ENCODE measurements at regions of chr4 and their contacts with region 1.

Region 1: DNA sequence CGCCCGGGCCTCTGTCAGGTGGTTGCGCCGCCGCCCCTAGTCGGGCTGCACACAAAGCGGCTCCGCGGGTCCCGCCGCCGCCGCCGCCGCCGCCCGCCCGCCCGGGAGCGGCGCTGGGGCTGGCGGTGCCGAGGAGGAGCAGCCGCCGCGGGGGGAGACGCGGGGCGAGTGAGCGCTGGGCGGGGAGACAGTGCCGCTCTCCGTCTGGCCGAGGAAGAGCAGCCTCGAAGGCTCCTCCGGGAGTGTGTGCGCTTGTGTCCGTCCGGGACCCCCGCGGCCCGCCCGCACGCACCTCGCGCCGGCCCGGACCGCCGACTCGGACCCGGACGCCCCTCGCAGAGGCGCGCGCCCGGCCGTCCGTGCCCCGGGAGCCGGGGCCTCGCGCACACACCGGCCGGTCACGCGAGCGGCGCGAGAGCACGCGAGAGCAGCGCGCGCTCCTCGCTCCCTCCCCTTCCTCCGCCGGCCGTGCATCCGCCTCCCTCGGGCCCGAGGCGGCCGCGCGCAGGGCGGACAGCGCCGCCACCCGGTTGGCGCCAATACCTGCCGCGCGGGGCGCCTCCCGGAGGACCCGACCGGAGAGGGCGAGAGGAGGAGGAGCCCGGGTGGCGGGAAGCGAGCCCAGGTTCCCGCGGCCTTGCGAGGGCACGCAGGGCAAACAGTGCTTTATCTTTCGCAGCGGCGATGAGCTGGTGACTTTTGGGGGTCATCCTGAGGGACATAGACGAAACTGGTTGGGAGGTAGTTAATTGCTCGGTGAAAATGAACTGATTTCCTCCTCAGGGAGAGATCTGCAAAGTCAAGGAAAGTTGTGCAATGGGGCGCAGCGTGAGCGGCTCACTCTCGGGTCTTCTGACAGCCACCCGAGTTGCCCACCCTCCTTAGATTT is at the start of gene PDS5A:
- DNase-seq: peak; percentile 94
- H3K4me3 ChIP-seq: peak within 1 kb of the TSS; percentile 85 to 96 (median 87)
- H3K27ac ChIP-seq: peak within 1 kb of the TSS; percentile 80
- H3K4me1 ChIP-seq: peaks cover 10% of the 10 kb centered on the region
- H3K27me3 ChIP-seq: no peaks in the 10 kb centered on the region
- CTCF ChIP-seq: peak; percentile 73 to 83
- total RNA-seq, gene PDS5A: 72.2 to 78.5 TPM

Region 2: GRCh38 chr4:39638354-39639240 is 339.1 kb before region 1 on chr4 and contains the start of gene SMIM14:
- CTCF ChIA-PET with region 1: no interaction called
- dilution Hi-C with region 1: no loop called
- in situ Hi-C with region 1: no loop called
- intact Hi-C with region 1: loop called (anchors 2 kb)
- DNase-seq: peak; percentile 98
- H3K4me3 ChIP-seq: peak within 1 kb of the TSS; percentile 66 to 93 (median 76)
- H3K27ac ChIP-seq: peak within 1 kb of the TSS; percentile 98
- H3K4me1 ChIP-seq: peaks cover 23% of the 10 kb centered on the region
- H3K27me3 ChIP-seq: no peaks in the 10 kb centered on the region
- CTCF ChIP-seq: peak in 1 of 2 donors; percentile 14
- total RNA-seq, gene SMIM14: 15.7 to 26.8 TPM

Region 3: GRCh38 chr4:39697740-39698423 is 279.9 kb before region 1 on chr4 and contains the start of gene UBE2K:
- CTCF ChIA-PET with region 1: no interaction called
- dilution Hi-C with region 1: no loop called
- in situ Hi-C with region 1: no loop called
- intact Hi-C with region 1: loop called (anchors 1 kb)
- DNase-seq: peak; percentile 88
- H3K4me3 ChIP-seq: peak within 1 kb of the TSS; percentile 84 to 97 (median 86)
- H3K27ac ChIP-seq: peak within 1 kb of the TSS; percentile 79
- H3K4me1 ChIP-seq: peaks cover 8% of the 10 kb centered on the region
- H3K27me3 ChIP-seq: no peaks in the 10 kb centered on the region
- CTCF ChIP-seq: no peak
- total RNA-seq, gene UBE2K: 23.3 to 105 TPM

Region 4: DNA sequence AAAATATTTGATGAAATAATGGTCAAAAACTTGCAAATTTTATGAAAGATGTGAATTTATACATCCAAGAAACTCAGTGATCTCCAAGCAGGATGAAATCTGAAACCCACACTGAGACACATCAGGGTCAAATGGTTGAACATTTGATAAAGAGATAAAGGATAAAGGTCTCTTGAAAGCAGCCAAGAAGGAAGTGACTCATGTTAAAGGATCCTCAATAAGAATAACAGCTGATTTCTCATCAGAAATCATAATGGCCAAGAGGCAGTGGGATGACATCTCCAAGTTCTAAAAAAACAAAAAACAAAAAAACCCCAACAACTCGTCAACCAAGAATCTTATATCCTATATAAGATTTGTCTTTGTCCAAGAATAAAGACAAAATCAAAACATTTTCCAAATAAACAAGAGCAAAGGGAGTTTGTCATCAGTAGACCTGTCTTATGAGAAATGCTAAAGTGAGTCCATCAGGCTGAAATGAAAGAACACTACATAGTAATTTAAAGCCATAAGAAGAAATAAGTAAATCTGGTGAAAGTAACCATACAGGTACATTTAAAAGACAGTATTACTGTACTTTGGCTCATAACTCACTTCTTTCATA is 121.7 kb before region 1 on chr4:
- CTCF ChIA-PET with region 1: no interaction called
- dilution Hi-C with region 1: no loop called
- in situ Hi-C with region 1: no loop called
- intact Hi-C with region 1: loop called (anchors 10 kb)
- DNase-seq: peak; percentile 55
- H3K4me3 ChIP-seq: no peak overlapping the region
- H3K27ac ChIP-seq: no peak overlapping the region
- H3K4me1 ChIP-seq: no peaks in the 10 kb centered on the region
- H3K27me3 ChIP-seq: no peaks in the 10 kb centered on the region
- CTCF ChIP-seq: no peak

Region 5: DNA sequence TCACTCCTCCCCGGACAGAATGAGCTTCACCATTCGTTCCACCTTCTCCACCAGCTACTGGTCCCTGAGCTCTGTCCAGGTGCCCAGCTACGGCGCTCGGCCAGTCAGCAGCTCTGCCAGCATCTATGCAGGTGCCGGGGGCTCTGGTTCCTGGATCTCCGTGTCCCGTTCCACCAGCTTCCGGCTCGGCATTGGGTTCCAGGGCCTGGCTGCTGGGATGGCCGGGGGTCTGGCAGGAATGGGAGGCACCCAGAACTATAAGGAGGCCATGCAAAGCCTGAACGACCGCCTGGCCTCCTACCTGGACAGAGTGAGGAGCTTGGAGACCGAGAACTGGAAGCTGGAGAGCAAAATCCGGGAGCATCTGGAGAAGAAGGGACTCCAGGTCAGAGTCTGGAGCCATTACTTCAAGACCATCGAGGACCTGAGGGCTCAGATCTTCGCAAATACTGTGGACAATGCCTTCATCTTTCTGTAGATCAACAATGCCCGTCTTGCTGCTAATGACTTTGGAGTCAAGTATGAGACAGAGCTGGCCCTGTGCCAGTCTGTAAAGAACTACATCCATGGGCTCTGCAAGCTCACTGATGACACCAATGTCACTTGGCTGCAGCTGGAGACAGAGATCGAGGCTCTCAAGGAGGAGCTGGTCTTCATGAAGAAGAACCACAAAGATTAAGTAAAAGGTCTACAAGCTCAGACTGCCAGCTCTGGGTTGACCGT is 42.6 kb after region 1 on chr4:
- CTCF ChIA-PET with region 1: no interaction called
- dilution Hi-C with region 1: loop called (anchors 5 kb)
- in situ Hi-C with region 1: no loop called
- intact Hi-C with region 1: no loop called
- DNase-seq: no peak
- H3K4me3 ChIP-seq: no peak overlapping the region
- H3K27ac ChIP-seq: no peak overlapping the region
- H3K4me1 ChIP-seq: no peaks in the 10 kb centered on the region
- H3K27me3 ChIP-seq: no peaks in the 10 kb centered on the region
- CTCF ChIP-seq: no peak

Region 6: GRCh38 chr4:40046311-40046980 is 68.7 kb after region 1 on chr4:
- CTCF ChIA-PET with region 1: no interaction called
- dilution Hi-C with region 1: no loop called
- in situ Hi-C with region 1: no loop called
- intact Hi-C with region 1: no loop called
- DNase-seq: peak; percentile 31
- H3K4me3 ChIP-seq: no peak overlapping the region
- H3K27ac ChIP-seq: no peak overlapping the region
- H3K4me1 ChIP-seq: no peaks in the 10 kb centered on the region
- H3K27me3 ChIP-seq: no peaks in the 10 kb centered on the region
- CTCF ChIP-seq: peak in 1 of 2 donors; percentile 8